ENCODE measurements at regions of chr10 and their contacts with region 1.

Region 1: DNA sequence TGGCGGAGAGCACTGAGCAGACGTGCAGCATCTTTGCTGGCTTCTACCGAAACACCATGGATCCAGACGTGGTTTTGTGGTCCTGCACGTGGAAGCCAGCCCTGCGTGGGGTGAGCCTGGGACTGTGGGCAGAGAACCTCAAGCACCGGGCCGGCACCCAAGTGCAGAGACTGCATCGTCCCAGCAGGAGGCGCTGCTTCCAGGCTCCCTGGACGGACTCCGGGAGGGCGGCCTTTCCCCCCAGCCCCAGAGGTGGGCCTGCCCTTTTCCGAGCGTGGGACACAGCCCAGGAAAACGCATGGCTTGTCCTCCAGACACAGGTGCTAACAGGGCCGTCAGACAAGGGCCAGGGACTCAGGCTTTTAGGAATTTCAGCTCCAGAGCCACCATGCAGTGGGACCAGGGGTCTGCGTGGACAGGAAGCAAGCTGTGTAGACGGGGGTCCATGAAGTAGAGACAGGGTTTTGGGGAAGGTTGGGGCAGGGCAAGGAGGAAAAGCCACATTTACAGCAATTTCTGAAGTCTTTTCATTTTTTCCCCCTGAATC is 303.9 kb downstream of the WDR37 start:
- DNase-seq: no peak
- ATAC-seq: peak; percentile 45; the same call in 2 of the 3 replicates
- H3K4me3 ChIP-seq: no peak overlapping the region
- H3K27ac ChIP-seq: no peak overlapping the region
- H3K4me1 ChIP-seq: no peaks in the 10 kb centered on the region; the same call in 1 of the 2 replicates
- H3K27me3 ChIP-seq: no peaks in the 10 kb centered on the region; a peak in 1 of 4 replicates
- CTCF ChIP-seq: peak in 2 of 3 experiments; percentile 31 to 34; a peak in 2 of 6 replicates
- EP300 ChIP-seq: no peak
- POLR2A ChIP-seq: no peak
- RAD21 ChIP-seq: no peak

Region 2: GRCh38 chr10:1003884-1004675 is 356.0 kb before region 1 on chr10:
- CTCF ChIA-PET with region 1: no interaction called
- POLR2A ChIA-PET with region 1: no interaction called
- RAD21 ChIA-PET with region 1: no interaction called
- SMC1A ChIA-PET with region 1: no interaction called
- in situ Hi-C with region 1: no loop called
- intact Hi-C with region 1: no loop called
- DNase-seq: no peak
- ATAC-seq: no peak
- H3K4me3 ChIP-seq: no peak overlapping the region
- H3K27ac ChIP-seq: no peak overlapping the region
- H3K4me1 ChIP-seq: no peaks in the 10 kb centered on the region
- H3K27me3 ChIP-seq: no peaks in the 10 kb centered on the region
- CTCF ChIP-seq: no peak
- EP300 ChIP-seq: no peak
- POLR2A ChIP-seq: no peak
- RAD21 ChIP-seq: no peak

Region 3: GRCh38 chr10:1297566-1298301 is 62.4 kb before region 1 on chr10:
- CTCF ChIA-PET with region 1: no interaction called
- POLR2A ChIA-PET with region 1: interaction called, 12 read pairs
- RAD21 ChIA-PET with region 1: no interaction called
- SMC1A ChIA-PET with region 1: no interaction called
- in situ Hi-C with region 1: no loop called
- intact Hi-C with region 1: no loop called
- DNase-seq: no peak
- ATAC-seq: no peak
- H3K4me3 ChIP-seq: no peak overlapping the region
- H3K27ac ChIP-seq: no peak overlapping the region
- H3K4me1 ChIP-seq: no peaks in the 10 kb centered on the region
- H3K27me3 ChIP-seq: no peaks in the 10 kb centered on the region
- CTCF ChIP-seq: no peak
- EP300 ChIP-seq: no peak
- POLR2A ChIP-seq: no peak
- RAD21 ChIP-seq: no peak

Measured in GM12878 (cell line).